ENCODE measurements at regions of chr1 and their contacts with region 1.

Region 1: DNA sequence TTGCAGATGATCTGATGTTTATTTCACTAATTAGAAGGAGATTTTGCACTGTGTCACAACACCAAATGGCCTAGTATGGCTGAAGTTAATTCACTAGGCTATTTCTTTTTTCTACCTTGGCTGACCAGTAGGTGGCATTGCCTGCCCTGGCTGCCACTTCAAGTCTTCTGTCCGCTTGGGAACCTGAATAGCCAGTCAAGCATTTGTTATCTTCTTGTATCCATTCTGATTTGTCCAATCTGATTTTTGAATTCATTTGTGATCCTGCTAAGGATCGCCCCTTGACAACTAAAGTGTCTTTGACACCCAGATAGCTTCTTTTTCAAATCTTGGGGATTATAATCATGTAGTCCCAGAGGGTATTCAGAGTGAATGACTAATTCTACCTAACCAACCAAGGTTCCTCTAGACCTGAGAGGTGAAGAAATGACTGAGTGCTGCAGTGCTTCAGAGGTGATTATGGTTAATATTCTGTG is 99.4 kb downstream of the GIPC2 start:
- DNase-seq: peak in 1 of 2 donors; percentile 52
- ATAC-seq: no peak
- H3K4me3 ChIP-seq: no peak overlapping the region
- H3K27ac ChIP-seq: no peak overlapping the region
- H3K4me1 ChIP-seq: no peaks in the 10 kb centered on the region
- H3K27me3 ChIP-seq: no peaks in the 10 kb centered on the region

Region 2: GRCh38 chr1:78126506-78126905 is 18.6 kb before region 1 on chr1:
- intact Hi-C with region 1: no loop called
- DNase-seq: no peak
- ATAC-seq: no peak
- H3K4me3 ChIP-seq: no peak overlapping the region
- H3K27ac ChIP-seq: no peak overlapping the region
- H3K4me1 ChIP-seq: no peaks in the 10 kb centered on the region
- H3K27me3 ChIP-seq: no peaks in the 10 kb centered on the region

Region 3: DNA sequence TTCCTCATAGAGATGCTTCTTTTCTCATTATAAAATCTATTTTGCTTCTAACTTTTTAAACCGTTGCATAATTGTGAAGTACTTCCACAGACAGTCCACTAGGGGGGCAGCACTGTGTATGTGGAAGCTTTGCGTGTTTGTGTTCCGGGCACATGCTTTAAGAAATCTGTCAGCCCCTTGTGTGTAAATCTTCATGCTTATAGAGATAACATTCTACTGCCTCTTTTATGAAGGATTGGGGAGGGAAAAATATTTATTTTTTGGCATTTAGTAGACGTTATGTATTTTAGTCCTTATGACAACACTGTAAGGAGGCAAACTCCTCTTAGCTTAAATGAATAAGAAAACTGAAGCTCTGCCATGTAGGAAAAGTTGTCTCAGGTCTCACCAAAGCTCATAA is 188.4 kb after region 1 on chr1:
- intact Hi-C with region 1: no loop called
- DNase-seq: no peak
- ATAC-seq: peak; percentile 74
- H3K4me3 ChIP-seq: no peak overlapping the region
- H3K27ac ChIP-seq: no peak overlapping the region
- H3K4me1 ChIP-seq: no peaks in the 10 kb centered on the region
- H3K27me3 ChIP-seq: no peaks in the 10 kb centered on the region

Region 4: GRCh38 chr1:78607334-78607927 is 462.3 kb after region 1 on chr1:
- intact Hi-C with region 1: loop called (anchors 5 to 10 kb)
- DNase-seq: no peak
- ATAC-seq: no peak
- H3K4me3 ChIP-seq: no peak overlapping the region
- H3K27ac ChIP-seq: no peak overlapping the region
- H3K4me1 ChIP-seq: no peaks in the 10 kb centered on the region
- H3K27me3 ChIP-seq: no peaks in the 10 kb centered on the region

Region 5: DNA sequence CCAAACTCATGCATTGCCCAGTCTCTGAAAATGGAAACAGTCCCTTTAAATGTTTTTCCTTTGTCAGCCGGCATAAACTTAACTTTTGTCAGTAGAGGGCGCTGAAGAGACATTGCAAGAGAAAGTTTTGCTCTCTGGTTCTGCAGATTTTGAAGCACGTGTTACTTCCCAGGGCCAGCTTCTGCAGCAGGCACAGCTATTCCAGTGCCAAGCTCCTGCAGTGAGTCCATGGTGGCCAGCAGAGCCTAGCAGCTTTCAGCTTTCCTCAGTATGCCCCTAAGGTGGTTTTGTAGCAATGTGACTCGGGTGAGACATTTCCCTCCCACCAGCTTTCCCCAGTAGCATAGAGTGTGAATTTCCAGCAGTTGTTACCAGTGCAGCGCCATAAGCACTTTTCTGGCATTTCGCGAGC is 472.5 kb after region 1 on chr1:
- intact Hi-C with region 1: loop called in 1 of 2 experiments (anchors 10 kb)
- DNase-seq: peak; percentile 76 to 78
- ATAC-seq: peak; percentile 91
- H3K4me3 ChIP-seq: no peak overlapping the region
- H3K27ac ChIP-seq: no peak overlapping the region
- H3K4me1 ChIP-seq: no peaks in the 10 kb centered on the region
- H3K27me3 ChIP-seq: no peaks in the 10 kb centered on the region

Region 6: DNA sequence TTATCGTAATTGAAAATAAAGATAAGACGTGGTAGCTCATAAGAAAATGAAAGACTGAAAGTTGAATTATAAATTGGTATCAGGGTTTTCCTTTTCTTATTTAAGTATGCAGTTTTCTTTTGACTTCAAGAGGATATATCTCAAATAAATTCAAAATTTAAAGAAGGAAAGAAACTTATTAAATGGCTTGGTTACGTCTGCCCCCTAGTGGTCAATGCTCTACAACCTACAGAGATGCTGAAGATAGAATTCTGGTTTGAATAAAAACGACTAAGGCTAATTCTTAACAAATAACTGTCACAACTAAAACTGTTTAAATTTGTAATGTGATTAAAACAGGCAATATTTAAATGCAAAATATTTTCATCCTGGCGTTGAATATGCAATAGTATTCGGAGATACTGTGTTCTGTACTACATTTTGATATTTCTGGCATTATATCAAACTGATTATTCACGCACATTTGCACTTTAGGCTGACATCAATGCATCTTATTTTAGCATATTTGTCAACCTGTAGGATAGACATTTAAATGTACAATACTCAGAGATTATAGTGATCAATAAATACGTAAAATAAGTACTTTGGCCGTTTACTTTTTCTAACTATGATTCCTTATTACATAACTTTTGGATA is 531.3 kb after region 1 on chr1:
- intact Hi-C with region 1: loop called in 1 of 2 experiments (anchors 10 kb)
- DNase-seq: no peak
- ATAC-seq: peak; percentile 80
- H3K4me3 ChIP-seq: no peak overlapping the region
- H3K27ac ChIP-seq: no peak overlapping the region
- H3K4me1 ChIP-seq: no peaks in the 10 kb centered on the region
- H3K27me3 ChIP-seq: no peaks in the 10 kb centered on the region

Measured in aorta (tissue), 5 donors.